Endothelial cell of umbilical vein (primary cell): ENCODE measurements at regions of chr1 and their contacts with region 1.

Region 1: DNA sequence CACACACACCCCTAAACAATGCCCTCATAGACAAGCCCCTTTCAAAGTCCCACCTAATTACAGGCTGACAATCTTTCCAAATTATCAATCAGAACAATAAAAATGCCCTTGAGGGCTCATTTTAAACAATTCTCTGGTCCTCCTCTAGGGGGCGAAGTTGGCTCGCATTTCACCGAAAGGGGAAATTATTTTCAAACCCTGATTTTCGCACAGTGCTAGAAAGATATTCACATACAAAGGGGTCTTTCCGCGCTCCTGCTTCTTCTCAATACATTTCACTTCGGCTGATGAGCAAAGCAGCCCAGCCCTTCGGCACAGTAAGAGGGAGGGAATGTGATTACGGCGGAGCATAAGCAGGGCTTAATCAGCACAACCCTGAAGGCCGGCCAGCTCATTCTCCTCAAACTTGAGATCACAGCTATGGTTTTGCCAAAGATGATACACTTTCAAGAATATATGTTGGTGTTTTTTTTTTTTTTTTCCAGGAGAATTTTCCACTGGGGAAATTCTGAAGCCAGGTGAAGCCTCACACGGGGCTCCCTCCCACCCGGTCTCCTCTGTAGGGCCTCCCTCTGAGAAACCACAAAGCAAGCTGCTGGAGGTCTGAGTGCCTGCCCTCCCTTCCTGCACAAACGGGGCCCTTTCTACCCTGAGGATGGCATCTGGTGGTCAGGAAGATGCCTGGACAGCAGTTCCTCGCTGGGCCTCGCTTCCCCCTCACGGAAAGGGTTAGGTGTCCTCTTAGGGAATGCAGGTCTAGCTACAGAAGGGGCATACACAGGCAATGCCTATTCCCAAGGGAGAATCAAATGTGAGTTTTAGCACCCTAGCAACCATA is 66.9 kb downstream of the GNG12 start:
- DNase-seq: peak; percentile 84
- H3K4me3 ChIP-seq: no peak overlapping the region
- H3K27ac ChIP-seq: peak overlapping the region; percentile 58
- H3K4me1 ChIP-seq: peaks cover 23% of the 10 kb centered on the region
- H3K27me3 ChIP-seq: no peaks in the 10 kb centered on the region
- CTCF ChIP-seq: peak; percentile 47 to 72
- POLR2A ChIP-seq: no peak

Region 2: GRCh38 chr1:67785847-67786753 is 19.7 kb after region 1 on chr1:
- CTCF ChIA-PET with region 1: interaction called, 19 read pairs
- POLR2A ChIA-PET with region 1: interaction called, 4 read pairs
- dilution Hi-C with region 1: no loop called
- intact Hi-C with region 1: loop called (anchors 1 kb)
- DNase-seq: peak; percentile 84
- H3K4me3 ChIP-seq: no peak overlapping the region
- H3K27ac ChIP-seq: peak overlapping the region; percentile 91
- H3K4me1 ChIP-seq: peaks cover 61% of the 10 kb centered on the region
- H3K27me3 ChIP-seq: no peaks in the 10 kb centered on the region
- CTCF ChIP-seq: no peak
- POLR2A ChIP-seq: no peak

Region 3: GRCh38 chr1:67832737-67833601 is 66.6 kb after region 1 on chr1 and contains the start of gene GNG12:
- CTCF ChIA-PET with region 1: interaction called, 63 read pairs
- POLR2A ChIA-PET with region 1: interaction called, 15 read pairs
- dilution Hi-C with region 1: no loop called
- intact Hi-C with region 1: loop called (anchors 1 kb)
- DNase-seq: peak; percentile 83
- H3K4me3 ChIP-seq: peak within 1 kb of the TSS; percentile 55 to 86 (median 55)
- H3K27ac ChIP-seq: peak within 1 kb of the TSS; percentile 90
- H3K4me1 ChIP-seq: peaks cover 29% of the 10 kb centered on the region
- H3K27me3 ChIP-seq: no peaks in the 10 kb centered on the region
- CTCF ChIP-seq: no peak
- POLR2A ChIP-seq: peak; percentile 85
- total RNA-seq, gene GNG12: 145 and 152 TPM in 2 replicates

Region 4: GRCh38 chr1:68010090-68010489 is 243.7 kb after region 1 on chr1:
- CTCF ChIA-PET with region 1: interaction called, 32 read pairs
- POLR2A ChIA-PET with region 1: no interaction called
- dilution Hi-C with region 1: no loop called
- intact Hi-C with region 1: loop called (anchors 1 kb)
- DNase-seq: peak; percentile 49
- H3K4me3 ChIP-seq: no peak overlapping the region
- H3K27ac ChIP-seq: no peak overlapping the region
- H3K4me1 ChIP-seq: peaks cover 12% of the 10 kb centered on the region
- H3K27me3 ChIP-seq: no peaks in the 10 kb centered on the region
- CTCF ChIP-seq: peak; percentile 10 to 30
- POLR2A ChIP-seq: no peak

Region 5: DNA sequence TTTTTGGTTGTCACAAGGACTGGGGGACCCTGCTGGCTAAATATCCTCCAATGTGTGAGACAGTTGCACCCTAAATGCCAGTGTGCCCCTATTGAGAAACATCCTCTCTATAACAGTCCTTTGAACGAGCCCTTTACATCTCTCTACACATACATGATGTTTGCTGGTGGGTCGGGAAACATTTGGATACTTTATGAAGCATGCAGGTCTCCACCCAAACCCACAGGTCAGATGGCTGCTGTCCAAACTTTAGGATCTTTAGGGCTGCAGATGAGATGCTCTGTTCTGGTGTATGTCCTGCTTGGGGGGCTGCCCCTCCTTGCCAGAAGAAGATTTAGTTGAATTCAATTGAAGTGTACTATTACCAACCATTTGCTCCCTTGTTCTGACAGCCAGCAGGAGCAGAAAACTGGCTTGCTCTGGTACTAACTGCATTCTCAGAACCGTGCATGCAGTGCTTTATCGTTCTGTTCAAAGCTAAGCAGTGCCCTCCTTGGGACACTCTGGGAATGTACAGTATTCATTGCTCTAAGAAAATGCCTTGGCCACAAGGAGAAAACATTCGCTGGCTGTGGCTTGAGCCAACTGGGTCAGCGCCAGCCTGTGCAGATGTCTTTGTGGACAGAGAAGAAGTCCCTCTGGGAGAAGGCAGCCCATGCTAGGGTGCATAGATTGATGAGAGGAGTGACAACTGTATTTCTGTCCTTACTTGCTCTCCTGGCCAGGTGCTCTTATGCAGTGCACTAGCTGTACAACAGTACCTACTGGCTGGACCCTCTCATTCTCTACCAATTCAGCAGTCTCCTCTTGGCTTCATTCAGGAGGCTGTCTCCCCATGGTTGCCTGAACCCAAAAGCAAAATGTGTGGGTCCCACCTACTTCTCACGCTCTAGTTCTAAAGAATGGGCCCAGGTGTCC is 345.4 kb after region 1 on chr1:
- CTCF ChIA-PET with region 1: interaction called, 34 read pairs
- POLR2A ChIA-PET with region 1: no interaction called
- dilution Hi-C with region 1: no loop called
- intact Hi-C with region 1: loop called (anchors 1 kb)
- DNase-seq: peak; percentile 88
- H3K4me3 ChIP-seq: no peak overlapping the region
- H3K27ac ChIP-seq: no peak overlapping the region
- H3K4me1 ChIP-seq: peaks cover 8% of the 10 kb centered on the region
- H3K27me3 ChIP-seq: no peaks in the 10 kb centered on the region
- CTCF ChIP-seq: peak; percentile 68
- POLR2A ChIP-seq: no peak